ENCODE measurements at regions of chr19 and their contacts with region 1.

Region 1: DNA sequence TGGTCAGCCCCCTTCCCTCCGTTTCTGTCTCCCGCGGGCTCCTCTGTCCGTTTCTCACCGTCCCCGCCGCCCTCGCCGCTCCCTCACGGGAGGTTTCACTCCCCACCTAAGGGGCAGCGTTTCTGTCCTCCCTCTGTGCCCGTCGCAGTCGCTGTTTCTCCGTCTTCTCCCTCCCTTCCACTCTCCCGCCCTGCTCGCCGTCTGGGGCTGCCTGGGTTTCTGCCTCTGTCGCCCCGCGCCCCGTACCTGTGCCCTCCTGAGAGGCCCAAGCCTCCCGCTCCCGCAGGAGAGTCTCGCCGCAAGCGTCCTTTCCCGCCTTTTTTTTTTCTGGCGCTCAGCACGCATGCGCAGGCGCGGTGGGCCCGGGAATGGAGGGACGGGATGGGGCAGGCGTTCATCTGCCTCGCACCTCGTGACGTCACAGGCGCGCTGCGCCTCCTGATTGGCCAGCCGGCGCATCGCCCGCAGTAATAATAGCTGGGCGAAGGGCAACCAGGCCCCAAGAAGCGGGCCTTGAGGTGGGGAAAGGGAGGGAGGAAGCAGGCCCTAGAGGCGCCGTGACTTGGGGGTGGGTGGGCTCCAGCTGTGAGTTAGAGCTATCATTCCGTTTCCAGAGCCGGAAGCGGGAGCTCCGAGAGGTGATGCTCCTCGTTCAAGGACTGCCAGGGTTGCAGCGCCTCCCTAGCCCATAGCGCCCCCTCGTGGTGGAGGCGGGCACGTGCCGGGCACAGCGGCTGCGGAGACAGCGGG is 15.4 kb downstream of the SSC5D start:
- DNase-seq: peak; percentile 85 to 96 (median 92)
- H3K4me3 ChIP-seq: peak overlapping the region; percentile 17 to 73
- H3K4me3 Mint-ChIP-seq: peak overlapping the region; percentile 81 to 90 (median 83)
- H3K27ac ChIP-seq: peak overlapping the region; percentile 46
- H3K27ac Mint-ChIP-seq: peak overlapping the region; percentile 75 to 92 (median 84)
- H3K4me1 ChIP-seq: peaks cover 4% of the 10 kb centered on the region
- H3K4me1 Mint-ChIP-seq: peaks cover 5 to 13% (median 10%) of the 10 kb centered on the region in 4 donors
- H3K27me3 ChIP-seq: no peaks in the 10 kb centered on the region
- H3K27me3 Mint-ChIP-seq: peaks cover 6% of the 10 kb centered on the region in 2 donors

Region 2: GRCh38 chr19:55141696-55142095 is 362.0 kb before region 1 on chr19:
- CTCF ChIA-PET with region 1: interaction called, 111 read pairs
- POLR2A ChIA-PET with region 1: interaction called, 6 read pairs
- intact Hi-C with region 1: no loop called
- DNase-seq: no peak
- H3K4me3 ChIP-seq: no peak overlapping the region
- H3K4me3 Mint-ChIP-seq: no peak overlapping the region
- H3K27ac ChIP-seq: no peak overlapping the region
- H3K27ac Mint-ChIP-seq: no peak overlapping the region
- H3K4me1 ChIP-seq: peaks cover 3% of the 10 kb centered on the region
- H3K4me1 Mint-ChIP-seq: peaks cover 3 to 6% (median 4%) of the 10 kb centered on the region in 4 donors
- H3K27me3 ChIP-seq: peaks cover 18% of the 10 kb centered on the region
- H3K27me3 Mint-ChIP-seq: peaks cover 34% of the 10 kb centered on the region in 2 donors

Region 3: DNA sequence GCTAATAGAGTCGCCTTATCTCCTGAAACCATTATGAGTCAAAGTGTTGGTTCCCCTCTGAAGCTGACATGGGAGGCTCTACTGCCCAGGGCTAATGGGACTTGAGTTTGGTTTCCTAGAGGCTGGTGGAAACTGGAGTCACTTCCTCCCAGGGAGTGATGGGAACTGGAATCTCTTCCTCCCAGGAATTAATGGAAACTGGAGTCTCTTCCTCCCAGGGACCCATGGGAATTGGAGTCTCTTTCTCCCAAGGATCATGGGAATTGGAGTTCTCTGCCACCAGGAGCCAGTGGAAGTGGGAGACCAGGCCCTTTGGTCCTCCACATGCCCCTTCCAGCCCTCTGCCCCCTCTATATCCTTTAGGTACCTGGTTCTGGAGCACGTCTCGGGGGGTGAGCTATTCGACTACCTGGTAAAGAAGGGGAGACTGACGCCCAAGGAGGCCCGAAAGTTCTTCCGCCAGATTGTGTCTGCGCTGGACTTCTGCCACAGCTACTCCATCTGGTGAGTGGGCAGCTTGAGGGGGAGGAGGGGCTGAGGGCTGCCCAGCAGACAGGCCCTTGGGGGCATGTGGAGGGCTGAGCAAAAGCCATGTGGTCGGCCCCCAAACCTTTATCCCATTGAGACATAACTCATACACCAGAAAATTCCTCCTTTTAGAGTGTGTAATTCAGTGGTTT is 214.4 kb before region 1 on chr19:
- CTCF ChIA-PET with region 1: interaction called, 10 read pairs
- POLR2A ChIA-PET with region 1: no interaction called
- intact Hi-C with region 1: loop called (anchors 2 kb)
- DNase-seq: no peak
- H3K4me3 ChIP-seq: no peak overlapping the region
- H3K4me3 Mint-ChIP-seq: no peak overlapping the region
- H3K27ac ChIP-seq: no peak overlapping the region
- H3K27ac Mint-ChIP-seq: no peak overlapping the region
- H3K4me1 ChIP-seq: peaks cover 6% of the 10 kb centered on the region
- H3K4me1 Mint-ChIP-seq: peaks cover 4 to 11% (median 8%) of the 10 kb centered on the region in 4 donors
- H3K27me3 ChIP-seq: no peaks in the 10 kb centered on the region
- H3K27me3 Mint-ChIP-seq: no peaks in the 10 kb centered on the region

Region 4: GRCh38 chr19:55369671-55370304 is 133.9 kb before region 1 on chr19:
- CTCF ChIA-PET with region 1: no interaction called
- POLR2A ChIA-PET with region 1: no interaction called
- intact Hi-C with region 1: no loop called
- DNase-seq: peak in 2 of 5 donors; percentile 26 to 32
- H3K4me3 ChIP-seq: no peak overlapping the region
- H3K4me3 Mint-ChIP-seq: peak overlapping the region; percentile 60 to 85 (median 75)
- H3K27ac ChIP-seq: no peak overlapping the region
- H3K27ac Mint-ChIP-seq: peak overlapping the region in 1 of 7 donors; percentile 57
- H3K4me1 ChIP-seq: peaks cover 7% of the 10 kb centered on the region
- H3K4me1 Mint-ChIP-seq: peaks cover 6 to 13% (median 9%) of the 10 kb centered on the region in 4 donors
- H3K27me3 ChIP-seq: peaks cover 23% of the 10 kb centered on the region
- H3K27me3 Mint-ChIP-seq: peaks cover 29 to 37% of the 10 kb centered on the region in 2 donors

Region 5: GRCh38 chr19:55431183-55431683 is 72.4 kb before region 1 on chr19:
- CTCF ChIA-PET with region 1: no interaction called
- POLR2A ChIA-PET with region 1: no interaction called
- intact Hi-C with region 1: no loop called
- DNase-seq: no peak
- H3K4me3 ChIP-seq: no peak overlapping the region
- H3K4me3 Mint-ChIP-seq: no peak overlapping the region
- H3K27ac ChIP-seq: no peak overlapping the region
- H3K27ac Mint-ChIP-seq: no peak overlapping the region
- H3K4me1 ChIP-seq: no peaks in the 10 kb centered on the region
- H3K4me1 Mint-ChIP-seq: peaks cover 0 to 2% (median under 1%) of the 10 kb centered on the region in 4 donors
- H3K27me3 ChIP-seq: peaks cover 6% of the 10 kb centered on the region
- H3K27me3 Mint-ChIP-seq: peaks cover 18 to 30% of the 10 kb centered on the region in 2 donors

Region 6: GRCh38 chr19:55467236-55468053 is 36.2 kb before region 1 on chr19:
- CTCF ChIA-PET with region 1: interaction called, 69 read pairs
- POLR2A ChIA-PET with region 1: interaction called, 6 read pairs
- intact Hi-C with region 1: loop called (anchors 1 kb)
- DNase-seq: peak in 4 of 5 donors; percentile 52 to 61 (median 52)
- H3K4me3 ChIP-seq: no peak overlapping the region
- H3K4me3 Mint-ChIP-seq: peak overlapping the region in 1 of 8 donors; percentile 36
- H3K27ac ChIP-seq: no peak overlapping the region
- H3K27ac Mint-ChIP-seq: peak overlapping the region in 3 of 7 donors; percentile 30 to 38 (median 34)
- H3K4me1 ChIP-seq: peaks cover 2% of the 10 kb centered on the region
- H3K4me1 Mint-ChIP-seq: peaks cover 2 to 7% (median 4%) of the 10 kb centered on the region in 4 donors
- H3K27me3 ChIP-seq: no peaks in the 10 kb centered on the region
- H3K27me3 Mint-ChIP-seq: no peaks in the 10 kb centered on the region

Region 7: GRCh38 chr19:55484593-55485438 is 18.9 kb before region 1 on chr19 and contains the start of gene NAT14:
- CTCF ChIA-PET with region 1: interaction called, 42 read pairs
- POLR2A ChIA-PET with region 1: interaction called, 6 read pairs
- intact Hi-C with region 1: no loop called
- DNase-seq: peak; percentile 60 to 72 (median 72)
- H3K4me3 ChIP-seq: peak within 1 kb of the TSS in 1 of 2 donors; percentile 68
- H3K4me3 Mint-ChIP-seq: peak within 1 kb of the TSS; percentile 73 to 81 (median 78)
- H3K27ac ChIP-seq: peak within 1 kb of the TSS; percentile 59
- H3K27ac Mint-ChIP-seq: peak within 1 kb of the TSS; percentile 67 to 98 (median 91)
- H3K4me1 ChIP-seq: peaks cover 13% of the 10 kb centered on the region
- H3K4me1 Mint-ChIP-seq: peaks cover 5 to 13% (median 7%) of the 10 kb centered on the region in 4 donors
- H3K27me3 ChIP-seq: no peaks in the 10 kb centered on the region
- H3K27me3 Mint-ChIP-seq: peaks cover 0 to 2% of the 10 kb centered on the region in 2 donors
- total RNA-seq, gene NAT14: 2.7 to 3.1 TPM

Region 8: DNA sequence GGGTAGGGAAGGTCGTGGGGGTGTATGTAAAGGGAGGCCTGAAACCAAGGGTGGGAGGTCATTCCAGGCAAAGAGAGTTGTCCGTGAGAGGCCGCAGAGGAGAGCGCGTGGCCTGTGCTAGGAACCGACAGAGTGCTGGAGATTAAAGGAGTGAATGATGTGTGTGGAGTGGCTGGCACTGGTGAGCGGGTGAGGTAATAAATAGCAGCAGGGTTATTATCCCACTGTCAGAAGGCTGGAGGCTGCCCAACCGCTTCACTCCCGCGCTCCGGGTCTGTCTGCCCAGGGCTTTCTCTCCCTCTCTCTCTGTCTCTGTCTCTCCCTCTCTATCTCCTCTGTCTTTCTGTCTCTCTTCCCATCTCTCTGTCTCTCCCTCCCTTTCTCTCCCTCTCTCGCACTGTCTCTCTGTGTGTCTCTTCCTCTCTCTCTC is 59.6 kb after region 1 on chr19:
- CTCF ChIA-PET with region 1: no interaction called
- POLR2A ChIA-PET with region 1: no interaction called
- intact Hi-C with region 1: no loop called
- DNase-seq: no peak
- H3K4me3 ChIP-seq: no peak overlapping the region
- H3K4me3 Mint-ChIP-seq: peak overlapping the region in 1 of 8 donors; percentile 27
- H3K27ac ChIP-seq: no peak overlapping the region
- H3K27ac Mint-ChIP-seq: no peak overlapping the region
- H3K4me1 ChIP-seq: no peaks in the 10 kb centered on the region
- H3K4me1 Mint-ChIP-seq: peaks cover 0 to 1% (median 0%) of the 10 kb centered on the region in 4 donors
- H3K27me3 ChIP-seq: no peaks in the 10 kb centered on the region
- H3K27me3 Mint-ChIP-seq: peaks cover 11 to 12% of the 10 kb centered on the region in 2 donors

Region 9: DNA sequence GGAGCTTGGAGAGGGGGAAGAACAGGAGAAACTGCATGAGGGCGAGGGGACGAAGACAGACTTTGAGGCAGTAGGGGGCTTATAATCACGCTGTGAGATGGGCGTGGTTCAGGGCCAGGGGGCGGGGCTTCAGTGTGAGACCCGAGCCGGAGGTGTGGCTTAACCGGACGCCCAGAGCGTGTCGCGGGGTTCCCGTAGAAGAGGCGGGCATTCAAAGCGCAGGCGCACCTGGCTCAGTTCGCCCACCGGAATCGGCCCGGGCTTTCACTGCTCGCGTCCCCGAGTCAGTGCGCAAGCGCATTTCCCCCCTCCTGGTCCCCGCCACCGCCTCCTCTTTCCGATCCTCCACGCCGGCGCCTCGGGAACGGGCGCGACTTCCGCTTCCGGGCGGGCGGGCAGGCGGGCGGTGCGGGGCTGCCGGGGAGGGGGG is 101.5 kb after region 1 on chr19:
- CTCF ChIA-PET with region 1: interaction called, 12 read pairs
- POLR2A ChIA-PET with region 1: interaction called, 5 read pairs
- intact Hi-C with region 1: no loop called
- DNase-seq: peak; percentile 95 to 98 (median 97)
- H3K4me3 ChIP-seq: peak overlapping the region; percentile 43 to 83
- H3K4me3 Mint-ChIP-seq: peak overlapping the region; percentile 79 to 93 (median 84)
- H3K27ac ChIP-seq: peak overlapping the region; percentile 88
- H3K27ac Mint-ChIP-seq: peak overlapping the region; percentile 83 to 97 (median 94)
- H3K4me1 ChIP-seq: peaks cover 42% of the 10 kb centered on the region
- H3K4me1 Mint-ChIP-seq: peaks cover 41 to 73% (median 48%) of the 10 kb centered on the region in 4 donors
- H3K27me3 ChIP-seq: no peaks in the 10 kb centered on the region
- H3K27me3 Mint-ChIP-seq: no peaks in the 10 kb centered on the region

Region 10: GRCh38 chr19:55632463-55632834 is 128.8 kb after region 1 on chr19:
- CTCF ChIA-PET with region 1: interaction called, 34 read pairs
- POLR2A ChIA-PET with region 1: interaction called, 13 read pairs
- intact Hi-C with region 1: no loop called
- DNase-seq: peak; percentile 85 to 95 (median 88)
- H3K4me3 ChIP-seq: no peak overlapping the region
- H3K4me3 Mint-ChIP-seq: peak overlapping the region; percentile 4 to 68 (median 52)
- H3K27ac ChIP-seq: no peak overlapping the region
- H3K27ac Mint-ChIP-seq: peak overlapping the region; percentile 69 to 98 (median 91)
- H3K4me1 ChIP-seq: peaks cover 41% of the 10 kb centered on the region
- H3K4me1 Mint-ChIP-seq: peaks cover 30 to 55% (median 43%) of the 10 kb centered on the region in 4 donors
- H3K27me3 ChIP-seq: no peaks in the 10 kb centered on the region
- H3K27me3 Mint-ChIP-seq: no peaks in the 10 kb centered on the region

Measured in CD4-positive, alpha-beta memory T cell (primary cell).